ENCODE measurements at regions of chr1 and their contacts with region 1.

Region 1: GRCh38 chr1:212455803-212456528 is 23.2 kb downstream of the NENF start:
- DNase-seq: peak; percentile 87
- ATAC-seq: peak; percentile 79
- H3K4me3 Mint-ChIP-seq: no peak overlapping the region
- H3K27ac Mint-ChIP-seq: no peak overlapping the region
- H3K4me1 Mint-ChIP-seq: peaks cover 7% of the 10 kb centered on the region
- H3K27me3 Mint-ChIP-seq: no peaks in the 10 kb centered on the region

Region 2: GRCh38 chr1:211698161-211699026 is 757.6 kb before region 1 on chr1:
- CTCF ChIA-PET with region 1: interaction called, 20 read pairs
- DNase-seq: peak; percentile 89
- ATAC-seq: peak; percentile 93
- H3K4me3 Mint-ChIP-seq: peak overlapping the region; percentile 45
- H3K27ac Mint-ChIP-seq: no peak overlapping the region
- H3K4me1 Mint-ChIP-seq: peaks cover 48% of the 10 kb centered on the region
- H3K27me3 Mint-ChIP-seq: peaks cover 21% of the 10 kb centered on the region

Region 3: DNA sequence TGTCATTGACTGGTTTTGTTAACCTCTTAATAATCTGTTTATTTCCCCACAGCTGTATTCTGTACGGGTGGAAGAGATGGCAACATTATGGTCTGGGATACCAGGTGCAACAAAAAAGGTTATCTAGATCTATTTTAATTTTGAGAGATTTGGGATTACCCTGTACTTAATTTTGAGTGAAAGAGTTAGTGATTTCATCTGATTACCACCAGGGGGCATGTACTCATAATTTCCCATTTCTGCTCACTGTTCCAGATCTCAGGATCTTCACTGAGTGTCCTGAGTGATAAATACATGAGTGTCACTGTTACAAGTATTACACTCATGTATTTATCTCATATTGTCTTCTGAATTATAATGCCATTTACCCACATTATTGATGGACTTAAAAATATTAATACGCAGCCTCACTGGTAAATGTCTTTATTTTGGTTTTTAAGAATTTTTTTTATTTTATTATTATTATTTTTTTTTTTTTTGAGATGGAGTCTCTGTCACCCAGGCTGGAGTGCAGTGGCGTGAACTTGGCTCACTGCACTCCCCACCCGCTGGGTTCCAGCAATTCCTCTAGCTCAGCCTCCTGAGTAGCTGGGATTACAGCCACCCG is 393.0 kb before region 1 on chr1:
- CTCF ChIA-PET with region 1: interaction called, 28 read pairs
- DNase-seq: no peak
- ATAC-seq: no peak
- H3K4me3 Mint-ChIP-seq: no peak overlapping the region
- H3K27ac Mint-ChIP-seq: no peak overlapping the region
- H3K4me1 Mint-ChIP-seq: peaks cover 3% of the 10 kb centered on the region
- H3K27me3 Mint-ChIP-seq: no peaks in the 10 kb centered on the region

Region 4: GRCh38 chr1:212368073-212368484 is 87.9 kb before region 1 on chr1:
- CTCF ChIA-PET with region 1: interaction called, 59 read pairs
- DNase-seq: peak; percentile 75
- ATAC-seq: peak; percentile 96
- H3K4me3 Mint-ChIP-seq: no peak overlapping the region
- H3K27ac Mint-ChIP-seq: no peak overlapping the region
- H3K4me1 Mint-ChIP-seq: peaks cover 1% of the 10 kb centered on the region
- H3K27me3 Mint-ChIP-seq: no peaks in the 10 kb centered on the region

Region 5: DNA sequence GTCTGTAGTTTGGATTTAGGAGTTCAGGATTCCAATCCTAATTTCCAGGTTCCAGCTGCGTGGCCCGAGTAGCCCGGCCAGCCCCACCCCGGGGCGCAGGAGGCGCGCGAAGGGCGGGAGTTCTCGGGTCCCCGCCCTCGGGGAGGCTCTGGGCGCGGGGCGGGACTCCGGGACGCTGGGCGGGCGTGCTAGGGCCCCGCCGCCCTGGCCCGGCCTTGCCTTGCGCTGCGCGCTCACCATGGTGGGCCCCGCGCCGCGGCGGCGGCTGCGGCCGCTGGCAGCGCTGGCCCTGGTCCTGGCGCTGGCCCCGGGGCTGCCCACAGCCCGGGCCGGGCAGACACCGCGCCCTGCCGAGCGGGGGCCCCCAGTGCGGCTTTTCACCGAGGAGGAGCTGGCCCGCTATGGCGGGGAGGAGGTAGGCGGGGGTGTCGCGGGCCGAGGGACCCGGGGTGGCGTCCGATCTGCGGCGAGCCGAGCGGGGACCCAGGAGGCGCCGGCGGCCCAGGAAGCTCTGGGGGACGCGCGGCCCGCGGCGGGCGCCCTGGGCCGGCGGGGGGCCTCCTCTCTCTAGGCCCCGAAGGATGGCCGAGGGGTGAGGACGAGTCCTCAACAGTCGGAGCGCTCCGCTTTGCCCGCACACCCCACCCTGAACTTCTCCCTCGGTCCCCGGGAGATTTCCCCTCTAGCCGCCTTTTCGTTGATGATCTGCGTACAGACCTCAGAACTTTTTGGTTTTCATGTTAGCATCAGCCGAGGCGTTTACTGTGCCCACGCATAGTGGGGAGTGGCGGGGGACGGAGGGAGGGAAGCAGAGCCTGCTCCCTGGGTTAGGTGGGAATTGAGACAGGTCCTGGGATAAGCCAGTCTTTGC is 23.0 kb before region 1 on chr1 and contains the start of gene NENF:
- CTCF ChIA-PET with region 1: interaction called, 18 read pairs
- DNase-seq: peak; percentile 84
- ATAC-seq: peak; percentile 100
- H3K4me3 Mint-ChIP-seq: peak within 1 kb of the TSS; percentile 73
- H3K27ac Mint-ChIP-seq: peak within 1 kb of the TSS; percentile 61
- H3K4me1 Mint-ChIP-seq: peaks cover 12% of the 10 kb centered on the region
- H3K27me3 Mint-ChIP-seq: peaks cover under 1% of the 10 kb centered on the region
- total RNA-seq, gene NENF: 33.9 to 37.6 TPM

Region 6: DNA sequence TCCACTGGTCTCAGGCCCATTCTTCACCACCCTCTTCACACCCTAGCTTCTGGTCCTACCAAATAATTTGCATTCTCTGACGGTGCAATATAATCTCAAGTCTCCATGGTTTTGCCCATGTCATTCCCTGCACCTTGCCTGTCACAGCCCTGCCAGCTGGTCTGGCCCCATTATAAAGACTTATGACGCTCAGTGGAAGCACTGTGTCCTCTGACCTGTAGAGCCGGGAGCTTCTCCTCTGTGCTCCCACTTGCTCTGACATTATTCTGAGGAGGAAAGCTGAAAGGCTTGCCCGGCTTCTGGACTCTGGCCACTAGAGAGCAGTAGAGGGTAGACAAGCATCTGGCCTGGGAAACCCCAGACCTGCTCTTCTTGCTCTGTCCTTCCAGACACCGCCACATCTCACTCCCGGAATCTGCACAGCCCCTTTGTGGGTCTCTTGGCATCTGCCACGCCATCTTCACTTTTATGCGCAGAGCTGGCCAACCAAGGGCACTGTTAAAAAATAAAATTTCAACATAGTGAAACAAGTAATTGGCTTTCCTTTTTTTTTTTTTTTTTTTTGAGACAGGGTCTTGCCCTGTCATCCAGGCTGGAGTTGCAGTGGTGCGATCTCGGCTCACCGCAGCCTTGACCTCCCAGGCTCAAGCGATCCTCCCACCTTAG is 21.2 kb after region 1 on chr1:
- CTCF ChIA-PET with region 1: interaction called, 65 read pairs
- DNase-seq: peak; percentile 86
- ATAC-seq: peak; percentile 93
- H3K4me3 Mint-ChIP-seq: no peak overlapping the region
- H3K27ac Mint-ChIP-seq: no peak overlapping the region
- H3K4me1 Mint-ChIP-seq: peaks cover 25% of the 10 kb centered on the region
- H3K27me3 Mint-ChIP-seq: peaks cover 20% of the 10 kb centered on the region

Region 7: GRCh38 chr1:212994926-212995325 is 539.0 kb after region 1 on chr1:
- CTCF ChIA-PET with region 1: interaction called, 13 read pairs
- DNase-seq: no peak
- ATAC-seq: no peak
- H3K4me3 Mint-ChIP-seq: no peak overlapping the region
- H3K27ac Mint-ChIP-seq: no peak overlapping the region
- H3K4me1 Mint-ChIP-seq: peaks cover 4% of the 10 kb centered on the region
- H3K27me3 Mint-ChIP-seq: no peaks in the 10 kb centered on the region

Measured in activated CD8-positive, alpha-beta memory T cell treated with anti-CD3 and anti-CD28 coated beads, Interleukin-2, amount 10 ng/mL, durations not matched to agents 7 days and 5 days (primary cell).